ENCODE measurements at regions of chr21 and their contacts with region 1.

Region 1: GRCh38 chr21:44647222-44647552 is 973 bp downstream of the KRTAP10-11 start:
- DNase-seq: no peak
- H3K4me3 ChIP-seq: no peak overlapping the region
- H3K27ac ChIP-seq: no peak overlapping the region
- H3K4me1 ChIP-seq: no peaks in the 10 kb centered on the region
- H3K27me3 ChIP-seq: peaks cover 3% of the 10 kb centered on the region
- CTCF ChIP-seq: no peak

Region 2: DNA sequence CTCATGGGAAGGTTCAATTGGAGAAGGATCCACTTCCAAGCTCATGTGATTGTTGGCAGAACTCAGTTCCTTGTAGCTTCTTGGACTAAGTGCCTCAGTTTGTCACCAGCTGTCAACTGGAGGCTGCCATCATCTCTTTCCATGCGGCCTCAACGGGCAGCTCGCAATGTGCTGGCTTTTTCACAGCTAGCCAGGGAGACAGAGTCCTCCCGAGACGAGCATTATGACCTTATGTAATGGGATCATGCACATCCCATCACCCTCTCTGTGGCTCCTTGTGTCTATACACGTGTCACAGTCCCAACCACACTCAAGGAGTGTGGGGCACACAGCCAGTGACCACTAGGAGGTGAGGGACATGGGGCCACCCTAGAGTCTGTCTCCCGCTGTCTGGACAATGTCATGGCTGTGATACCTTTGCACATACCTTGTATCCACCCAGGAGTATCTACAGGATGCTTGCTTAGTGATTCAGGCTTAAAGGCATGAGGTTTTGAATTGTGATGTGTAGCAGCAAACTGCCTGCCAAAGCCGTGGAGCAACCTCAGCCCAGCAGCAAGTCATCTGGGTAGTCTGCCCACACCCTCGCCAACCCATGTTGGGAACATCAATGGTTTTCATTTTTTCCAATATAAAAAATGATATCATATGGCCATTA is 51.0 kb before region 1 on chr21:
- CTCF ChIA-PET with region 1: no interaction called
- dilution Hi-C with region 1: loop called (anchors 5 kb)
- in situ Hi-C with region 1: no loop called
- intact Hi-C with region 1: no loop called
- DNase-seq: peak; percentile 62
- H3K4me3 ChIP-seq: no peak overlapping the region
- H3K27ac ChIP-seq: no peak overlapping the region
- H3K4me1 ChIP-seq: peaks cover 21% of the 10 kb centered on the region
- H3K27me3 ChIP-seq: no peaks in the 10 kb centered on the region
- CTCF ChIP-seq: no peak

Region 3: DNA sequence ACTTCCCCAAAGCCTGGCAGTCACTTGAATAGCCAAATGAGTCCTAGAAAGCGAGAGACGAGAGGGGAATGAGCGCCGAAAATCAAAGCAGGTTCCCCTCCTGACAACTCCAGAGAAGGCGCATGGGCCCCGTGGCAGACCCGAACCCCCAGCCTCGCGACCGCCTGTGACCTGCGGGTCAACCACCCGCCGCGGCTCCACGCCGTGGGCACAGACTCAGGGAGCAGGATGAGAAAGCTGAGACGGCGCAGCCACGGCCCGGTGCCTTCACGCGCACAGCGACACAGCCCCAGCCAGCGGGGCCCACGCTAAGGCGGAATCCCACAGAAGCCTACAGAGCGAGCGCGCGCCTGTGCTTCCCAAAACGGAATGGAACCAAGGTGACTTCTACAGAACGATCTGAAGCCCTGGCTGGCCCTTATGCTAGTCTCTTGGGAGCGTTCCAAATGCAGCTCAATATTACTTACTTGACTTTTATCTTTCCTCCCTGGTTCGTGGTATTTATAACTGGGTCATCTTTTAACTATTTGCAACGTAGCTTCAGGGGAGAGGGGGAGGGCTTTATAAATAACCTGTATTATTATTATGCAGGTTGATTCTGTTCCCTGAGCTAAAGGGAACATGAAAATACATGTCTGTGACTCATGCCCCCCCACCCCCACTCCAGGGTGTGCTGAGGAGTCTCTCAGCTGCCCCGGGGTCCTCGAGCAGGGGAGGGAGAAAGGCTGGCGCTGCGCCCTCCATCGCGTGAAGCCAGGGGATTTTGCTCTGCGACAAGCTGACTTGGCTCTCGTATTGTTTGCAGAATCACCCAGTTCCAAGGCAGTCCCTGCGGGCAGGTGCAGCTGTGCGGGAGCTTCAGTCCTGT is 62.5 kb after region 1 on chr21:
- CTCF ChIA-PET with region 1: no interaction called
- dilution Hi-C with region 1: loop called (anchors 5 kb)
- in situ Hi-C with region 1: no loop called
- intact Hi-C with region 1: no loop called
- DNase-seq: peak; percentile 82
- H3K4me3 ChIP-seq: peak overlapping the region; percentile 10 to 39 (median 32)
- H3K27ac ChIP-seq: no peak overlapping the region
- H3K4me1 ChIP-seq: peaks cover 27% of the 10 kb centered on the region
- H3K27me3 ChIP-seq: peaks cover 16% of the 10 kb centered on the region
- CTCF ChIP-seq: no peak